ENCODE measurements at regions of chr12 and their contacts with region 1.

Region 1: DNA sequence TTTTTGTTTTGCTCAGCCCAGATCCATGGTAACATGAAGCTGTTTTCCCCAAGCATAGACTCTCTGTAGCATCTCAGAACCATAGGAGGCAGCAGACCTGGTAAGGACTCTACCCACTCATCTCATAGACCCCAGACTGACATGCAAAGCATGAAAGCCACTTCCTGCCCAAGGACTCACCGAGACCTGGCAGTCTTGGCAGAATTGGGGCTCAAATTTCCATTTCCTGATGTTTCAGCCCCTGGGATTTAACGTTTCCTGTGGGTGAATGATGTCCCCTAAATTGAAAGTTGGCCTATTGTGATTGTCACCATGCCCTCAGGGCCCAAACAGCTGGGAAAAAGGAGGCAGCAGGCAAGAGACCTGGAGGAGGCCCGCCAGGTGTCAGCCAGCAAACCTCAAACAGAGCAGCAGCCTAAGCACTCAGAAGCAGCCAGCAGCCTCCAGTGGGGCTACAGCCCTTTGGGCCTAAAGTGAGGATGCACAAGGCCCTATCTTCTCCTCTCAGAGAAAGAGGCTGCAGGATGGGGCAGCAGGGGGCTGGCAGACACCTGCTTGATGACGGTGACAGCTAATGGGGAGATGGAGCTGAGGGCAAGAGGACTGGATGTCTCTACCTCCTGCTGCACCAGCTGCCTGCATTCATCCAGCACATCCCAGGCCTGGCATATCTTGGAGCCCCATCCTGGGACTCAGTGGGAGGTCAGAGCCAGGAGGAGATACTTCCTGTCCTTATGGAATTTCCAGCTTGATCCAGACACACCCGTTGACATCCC is 8.5 kb downstream of the KRT85 start:
- DNase-seq: no peak
- ATAC-seq: no peak
- H3K4me3 ChIP-seq: no peak overlapping the region
- H3K27ac ChIP-seq: peak overlapping the region in 1 of 2 experiments; percentile 24; a peak in 1 of 6 replicates
- H3K4me1 ChIP-seq: 0 out of 3 replicates have a peak, but pooled peaks cover 3% of the 10 kb centered on the region
- CTCF ChIP-seq: no peak
- EP300 ChIP-seq: no peak
- POLR2A ChIP-seq: no peak
- RAD21 ChIP-seq: no peak

Region 2: DNA sequence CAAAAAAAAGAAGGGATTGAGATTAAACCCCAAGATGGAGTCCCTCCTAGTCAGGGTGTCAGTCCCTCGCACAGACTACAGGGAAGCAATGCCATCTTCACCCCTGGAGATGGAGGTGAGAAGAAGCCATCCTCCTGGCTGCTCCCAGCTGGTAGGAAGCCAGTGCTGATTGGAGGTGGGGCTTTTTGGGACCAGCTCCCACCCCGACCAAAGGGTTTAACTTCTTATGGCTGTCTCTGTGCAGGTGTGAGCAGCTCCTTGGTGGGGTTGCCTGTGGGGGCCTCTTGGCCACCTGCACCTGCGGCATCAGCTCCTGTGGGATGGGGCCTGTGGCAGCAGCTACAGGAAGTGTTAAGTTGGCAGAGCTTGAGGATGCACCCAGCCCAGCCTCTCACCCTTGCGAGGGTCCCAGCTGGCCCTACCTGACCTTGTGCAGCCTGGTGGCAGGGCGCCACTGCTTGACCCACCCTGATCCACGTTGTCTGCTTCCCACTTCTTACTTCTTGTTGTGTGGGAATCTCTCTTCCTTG is 88.2 kb before region 1 on chr12:
- CTCF ChIA-PET with region 1: no interaction called
- POLR2A ChIA-PET with region 1: no interaction called
- DNase-seq: no peak
- ATAC-seq: no peak; a peak in 1 of 6 replicates
- H3K4me3 ChIP-seq: no peak overlapping the region
- H3K27ac ChIP-seq: peak overlapping the region; percentile 43 to 77
- H3K4me1 ChIP-seq: peaks cover 8% of the 10 kb centered on the region
- CTCF ChIP-seq: no peak
- EP300 ChIP-seq: no peak
- POLR2A ChIP-seq: no peak
- RAD21 ChIP-seq: no peak

Region 3: GRCh38 chr12:52285172-52285745 is 73.5 kb before region 1 on chr12:
- CTCF ChIA-PET with region 1: no interaction called
- POLR2A ChIA-PET with region 1: no interaction called
- DNase-seq: peak; percentile 58 to 84
- ATAC-seq: no peak
- H3K4me3 ChIP-seq: peak overlapping the region; percentile 59
- H3K27ac ChIP-seq: peak overlapping the region; percentile 96 to 100
- H3K4me1 ChIP-seq: peaks cover 57% of the 10 kb centered on the region
- CTCF ChIP-seq: no peak
- EP300 ChIP-seq: peak; percentile 90 to 96; a peak in 4 of 5 replicates
- POLR2A ChIP-seq: peak; percentile 80
- RAD21 ChIP-seq: peak in 1 of 2 experiments; percentile 15; a peak in 1 of 5 replicates

Region 4: DNA sequence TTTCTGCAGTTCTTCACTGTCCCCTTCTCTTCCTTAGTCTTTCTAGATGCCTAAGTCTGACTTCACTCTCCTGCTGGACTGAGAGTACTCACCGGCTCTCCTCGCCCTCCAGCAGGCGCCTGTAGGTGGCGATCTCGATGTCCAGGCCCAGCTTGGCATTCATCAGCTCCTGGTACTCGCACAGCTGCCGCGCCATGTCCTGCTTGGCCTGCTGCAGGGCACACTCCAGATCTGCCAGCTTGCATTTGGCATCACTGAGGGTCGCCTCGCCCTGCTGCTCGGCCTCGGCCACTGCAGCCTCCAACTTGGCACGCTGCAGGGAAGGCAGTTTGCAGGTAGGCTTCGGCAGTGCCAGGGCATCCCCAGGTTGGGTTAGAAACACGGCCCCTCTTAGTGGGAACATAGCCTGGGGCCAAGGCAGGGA is 21.5 kb after region 1 on chr12:
- CTCF ChIA-PET with region 1: interaction called, 14 read pairs
- POLR2A ChIA-PET with region 1: no interaction called
- DNase-seq: peak; percentile 52 to 66
- ATAC-seq: peak; percentile 65 to 92; a peak in 5 of 6 replicates
- H3K4me3 ChIP-seq: no peak overlapping the region
- H3K27ac ChIP-seq: no peak overlapping the region
- H3K4me1 ChIP-seq: no peaks in the 10 kb centered on the region
- CTCF ChIP-seq: peak; percentile 53
- EP300 ChIP-seq: no peak
- POLR2A ChIP-seq: no peak
- RAD21 ChIP-seq: peak; percentile 52 to 65; a peak in 3 of 5 replicates

Region 5: GRCh38 chr12:52473768-52474167 is 115.0 kb after region 1 on chr12 and contains the start of gene KRT6C:
- CTCF ChIA-PET with region 1: no interaction called
- POLR2A ChIA-PET with region 1: no interaction called
- DNase-seq: no peak
- ATAC-seq: no peak
- H3K4me3 ChIP-seq: no peak within 1 kb of the TSS
- H3K27ac ChIP-seq: no peak within 1 kb of the TSS
- H3K4me1 ChIP-seq: no peaks in the 10 kb centered on the region
- CTCF ChIP-seq: no peak
- EP300 ChIP-seq: no peak
- POLR2A ChIP-seq: no peak
- RAD21 ChIP-seq: no peak
- polyA plus RNA-seq, gene KRT6C: not detected in 2 replicates

Measured in A549 (cell line).